OCI-LY7 (cell line): ENCODE measurements at regions of chr1 and their contacts with region 1.

Region 1: DNA sequence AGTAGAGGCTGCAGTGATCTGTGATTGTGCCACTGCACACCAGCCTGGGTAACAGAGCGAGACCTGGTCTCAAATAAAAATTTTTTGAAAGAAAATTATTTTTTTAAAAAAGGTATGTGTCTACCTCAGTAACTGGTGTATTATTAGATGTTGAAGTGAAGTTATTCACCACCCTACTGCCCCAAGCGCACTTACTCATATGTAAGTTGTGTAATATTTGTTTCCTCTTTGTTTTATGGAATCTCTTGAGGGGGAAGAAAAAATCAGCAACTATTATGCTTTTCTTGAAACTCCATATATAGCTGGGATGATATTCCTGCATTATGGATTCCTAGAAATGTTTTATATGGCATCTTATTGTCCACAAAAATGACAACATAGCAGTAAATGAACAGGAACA is 21.3 kb downstream of the RBM15 start:
- DNase-seq: no peak
- H3K4me3 ChIP-seq: no peak overlapping the region
- H3K27ac ChIP-seq: no peak overlapping the region
- H3K4me1 ChIP-seq: peaks cover 13% of the 10 kb centered on the region
- CTCF ChIP-seq: no peak

Region 2: DNA sequence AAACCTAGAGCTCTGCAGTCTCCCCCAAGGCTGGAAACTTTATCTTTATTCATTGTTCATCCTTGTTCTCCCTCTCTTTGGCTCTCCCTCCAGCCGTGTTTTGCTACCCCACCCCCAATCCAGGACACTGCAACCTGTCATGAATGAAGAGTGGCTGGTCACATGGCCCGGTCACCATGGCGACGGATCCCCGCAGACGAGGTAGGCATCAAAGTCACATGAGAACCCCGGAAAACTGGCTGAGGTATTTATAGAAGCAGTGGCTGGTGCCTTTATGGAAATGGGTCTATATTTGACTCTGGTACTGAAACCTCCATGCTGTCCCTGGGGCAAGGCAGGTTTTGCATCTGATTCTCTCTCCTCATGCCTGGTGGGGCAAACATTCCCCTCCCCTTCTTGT is 223.5 kb before region 1 on chr1:
- CTCF ChIA-PET with region 1: no interaction called
- POLR2A ChIA-PET with region 1: no interaction called
- intact Hi-C with region 1: no loop called
- DNase-seq: no peak
- H3K4me3 ChIP-seq: no peak overlapping the region
- H3K27ac ChIP-seq: no peak overlapping the region
- H3K4me1 ChIP-seq: no peaks in the 10 kb centered on the region
- CTCF ChIP-seq: no peak

Region 3: GRCh38 chr1:110347182-110347893 is 13.1 kb before region 1 on chr1:
- CTCF ChIA-PET with region 1: no interaction called
- POLR2A ChIA-PET with region 1: interaction called, 11 read pairs
- intact Hi-C with region 1: no loop called
- DNase-seq: no peak
- H3K4me3 ChIP-seq: peak overlapping the region; percentile 93
- H3K27ac ChIP-seq: peak overlapping the region; percentile 11
- H3K4me1 ChIP-seq: peaks cover 98% of the 10 kb centered on the region
- CTCF ChIP-seq: no peak

Region 4: DNA sequence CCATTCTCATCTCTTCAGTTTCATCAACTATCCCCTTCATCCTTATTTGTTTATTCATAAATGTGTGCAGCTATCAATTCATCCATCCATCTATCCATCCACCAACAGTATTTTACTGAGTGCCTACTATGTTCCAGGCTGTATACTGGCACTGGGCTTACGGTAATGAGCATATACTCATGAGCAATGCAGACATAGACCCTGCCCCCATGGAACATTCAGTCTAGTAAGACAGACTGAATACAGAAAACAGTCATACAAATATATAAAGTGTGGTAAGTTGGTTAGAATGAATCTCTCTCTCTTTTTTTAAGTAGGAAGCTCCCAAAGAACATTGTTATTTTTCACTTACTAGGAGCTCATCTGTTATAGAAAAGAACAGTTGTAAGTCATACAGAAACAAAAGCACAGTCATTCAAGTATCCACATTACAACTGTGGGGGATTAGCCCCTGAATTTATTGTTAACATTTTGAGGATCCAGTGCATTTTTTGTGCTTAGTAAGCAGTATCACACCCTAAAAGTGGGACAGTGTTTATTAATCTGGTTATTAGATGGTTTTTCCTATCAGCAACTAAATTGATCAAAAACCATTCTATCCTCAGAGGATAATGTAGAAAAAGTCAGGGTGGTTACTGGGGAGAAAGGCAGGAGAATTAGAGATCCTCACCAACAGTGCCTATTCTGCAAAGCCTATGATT is 26.8 kb after region 1 on chr1:
- CTCF ChIA-PET with region 1: no interaction called
- POLR2A ChIA-PET with region 1: no interaction called
- intact Hi-C with region 1: no loop called
- DNase-seq: no peak
- H3K4me3 ChIP-seq: no peak overlapping the region
- H3K27ac ChIP-seq: peak overlapping the region; percentile 94
- H3K4me1 ChIP-seq: peaks cover 57% of the 10 kb centered on the region
- CTCF ChIP-seq: no peak